Ascending aorta (tissue), 2 donors: ENCODE measurements at regions of chr2 and their contacts with region 1.

Region 1: GRCh38 chr2:33426666-33427231 is 49.7 kb upstream of the RASGRP3 start:
- DNase-seq: no peak
- H3K4me3 ChIP-seq: no peak overlapping the region
- H3K27ac ChIP-seq: no peak overlapping the region
- H3K4me1 ChIP-seq: no peaks in the 10 kb centered on the region
- H3K27me3 ChIP-seq: no peaks in the 10 kb centered on the region
- CTCF ChIP-seq: no peak

Region 2: GRCh38 chr2:32559136-32559535 is 867.6 kb before region 1 on chr2:
- intact Hi-C with region 1: loop called (anchors 5 kb)
- DNase-seq: no peak
- H3K4me3 ChIP-seq: no peak overlapping the region
- H3K27ac ChIP-seq: no peak overlapping the region
- H3K4me1 ChIP-seq: no peaks in the 10 kb centered on the region
- H3K27me3 ChIP-seq: no peaks in the 10 kb centered on the region
- CTCF ChIP-seq: no peak